B cell (primary cell): ENCODE measurements at regions of chr1 and their contacts with region 1.

Region 1: GRCh38 chr1:22025368-22026155 is 24.1 kb downstream of the CELA3A start:
- DNase-seq: peak; percentile 93
- ATAC-seq: peak; percentile 76
- H3K4me3 ChIP-seq: peak overlapping the region; percentile 85 to 99 (median 94)
- H3K4me3 Mint-ChIP-seq: peak overlapping the region; percentile 96
- H3K27ac ChIP-seq: peak overlapping the region; percentile 98
- H3K27ac Mint-ChIP-seq: peak overlapping the region; percentile 98
- H3K4me1 ChIP-seq: peaks cover 17 to 38% of the 10 kb centered on the region in 2 donors
- H3K4me1 Mint-ChIP-seq: peaks cover 43% of the 10 kb centered on the region
- H3K27me3 ChIP-seq: no peaks in the 10 kb centered on the region
- H3K27me3 Mint-ChIP-seq: no peaks in the 10 kb centered on the region
- CTCF ChIP-seq: no peak

Region 2: GRCh38 chr1:20786253-20787028 is 1239.1 kb before region 1 on chr1:
- CTCF ChIA-PET with region 1: no interaction called
- POLR2A ChIA-PET with region 1: interaction called, 5 read pairs
- intact Hi-C with region 1: loop called (anchors 5 kb)
- DNase-seq: peak; percentile 98
- ATAC-seq: peak; percentile 72
- H3K4me3 ChIP-seq: peak overlapping the region; percentile 78 to 92 (median 82)
- H3K4me3 Mint-ChIP-seq: peak overlapping the region; percentile 99
- H3K27ac ChIP-seq: peak overlapping the region; percentile 81 to 91
- H3K27ac Mint-ChIP-seq: peak overlapping the region; percentile 98
- H3K4me1 ChIP-seq: peaks cover 19 to 33% of the 10 kb centered on the region in 2 donors
- H3K4me1 Mint-ChIP-seq: peaks cover 39% of the 10 kb centered on the region
- H3K27me3 ChIP-seq: no peaks in the 10 kb centered on the region
- H3K27me3 Mint-ChIP-seq: no peaks in the 10 kb centered on the region
- CTCF ChIP-seq: no peak

Region 3: DNA sequence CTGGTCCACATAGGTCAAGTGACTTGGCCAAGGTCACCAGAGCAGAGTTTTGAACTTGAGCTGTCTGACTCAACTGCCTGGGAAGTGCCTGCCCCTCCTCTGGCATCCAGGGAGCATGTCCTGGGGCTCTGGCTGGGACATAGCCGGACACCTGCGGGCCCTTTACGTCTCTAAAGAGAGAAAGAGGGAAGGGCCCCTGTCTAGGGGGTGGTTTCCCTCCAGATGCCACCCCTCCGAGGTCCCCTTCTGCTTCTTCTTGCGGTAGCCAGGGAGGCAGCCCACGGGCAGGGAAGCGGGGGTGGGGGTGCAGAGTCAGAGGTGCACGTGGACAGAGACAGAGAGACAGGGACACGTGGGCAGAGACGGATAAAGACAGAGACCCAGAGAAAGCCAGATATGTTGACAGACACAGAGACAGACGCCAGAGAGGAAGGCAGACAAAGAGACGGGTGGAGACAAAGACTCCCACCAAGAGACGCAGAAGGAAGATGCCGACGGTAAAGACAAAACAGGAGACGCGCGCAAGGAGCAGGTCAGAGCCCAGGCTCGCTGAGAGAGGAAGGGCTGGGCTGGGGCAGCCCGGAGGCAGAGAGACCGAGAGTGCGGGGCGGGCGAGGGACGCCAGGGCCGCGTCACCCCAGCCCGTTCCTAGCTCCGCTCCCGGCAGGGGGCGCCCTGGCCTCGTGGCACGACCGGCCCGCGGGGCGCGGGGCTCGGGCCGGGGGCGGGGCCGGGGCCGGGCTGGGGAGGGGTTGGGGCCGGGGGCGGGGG is 516.8 kb before region 1 on chr1:
- CTCF ChIA-PET with region 1: no interaction called
- POLR2A ChIA-PET with region 1: no interaction called
- intact Hi-C with region 1: loop called (anchors 10 kb)
- DNase-seq: peak; percentile 82
- ATAC-seq: peak; percentile 96
- H3K4me3 ChIP-seq: peak overlapping the region in 4 of 5 experiments; percentile 11 to 41 (median 38)
- H3K4me3 Mint-ChIP-seq: peak overlapping the region; percentile 82
- H3K27ac ChIP-seq: no peak overlapping the region
- H3K27ac Mint-ChIP-seq: no peak overlapping the region
- H3K4me1 ChIP-seq: peaks cover 22 to 33% of the 10 kb centered on the region in 2 donors
- H3K4me1 Mint-ChIP-seq: peaks cover 19% of the 10 kb centered on the region
- H3K27me3 ChIP-seq: peaks cover 0 to 39% (median 9%) of the 10 kb centered on the region in 4 experiments
- H3K27me3 Mint-ChIP-seq: peaks cover 34% of the 10 kb centered on the region
- CTCF ChIP-seq: peak; percentile 39

Region 4: GRCh38 chr1:22052115-22053016 is 26.8 kb after region 1 on chr1 and contains the start of gene CDC42:
- CTCF ChIA-PET with region 1: interaction called, 89 read pairs
- POLR2A ChIA-PET with region 1: interaction called, 87 read pairs
- intact Hi-C with region 1: loop called (anchors 1 kb)
- DNase-seq: peak; percentile 97
- ATAC-seq: peak; percentile 90
- H3K4me3 ChIP-seq: peak within 1 kb of the TSS; percentile 66 to 89 (median 79)
- H3K4me3 Mint-ChIP-seq: peak within 1 kb of the TSS; percentile 98
- H3K27ac ChIP-seq: peak within 1 kb of the TSS; percentile 96 to 98
- H3K27ac Mint-ChIP-seq: peak within 1 kb of the TSS; percentile 98
- H3K4me1 ChIP-seq: peaks cover 37 to 47% of the 10 kb centered on the region in 2 donors
- H3K4me1 Mint-ChIP-seq: peaks cover 45% of the 10 kb centered on the region
- H3K27me3 ChIP-seq: no peaks in the 10 kb centered on the region
- H3K27me3 Mint-ChIP-seq: no peaks in the 10 kb centered on the region
- CTCF ChIP-seq: no peak
- total RNA-seq, gene CDC42: 202 and 209 TPM in 2 replicates

Region 5: DNA sequence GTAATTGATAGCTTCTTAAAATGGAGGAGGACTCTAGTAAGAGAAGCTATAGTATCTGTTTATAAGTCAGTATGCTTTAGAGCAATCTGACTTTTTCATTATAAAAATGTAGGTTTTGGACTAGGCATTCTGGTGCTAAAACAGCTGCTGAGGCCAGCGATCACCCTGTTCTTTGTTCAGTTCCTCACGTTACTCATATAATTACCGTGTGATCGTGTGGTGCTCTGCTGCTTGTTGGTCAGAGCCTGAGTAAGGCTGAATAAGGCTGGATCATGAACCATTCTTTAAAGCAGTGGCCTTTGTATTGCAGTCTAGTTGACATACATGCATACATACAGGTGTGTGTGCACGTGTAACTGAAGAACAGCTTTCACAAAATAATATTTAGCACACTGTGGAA is 52.2 kb after region 1 on chr1:
- CTCF ChIA-PET with region 1: interaction called, 24 read pairs
- POLR2A ChIA-PET with region 1: no interaction called
- intact Hi-C with region 1: no loop called
- DNase-seq: no peak
- ATAC-seq: no peak
- H3K4me3 ChIP-seq: no peak overlapping the region
- H3K4me3 Mint-ChIP-seq: peak overlapping the region; percentile 35
- H3K27ac ChIP-seq: peak overlapping the region in 1 of 2 donors; percentile 17
- H3K27ac Mint-ChIP-seq: no peak overlapping the region
- H3K4me1 ChIP-seq: peaks cover 55 to 63% of the 10 kb centered on the region in 2 donors
- H3K4me1 Mint-ChIP-seq: peaks cover 78% of the 10 kb centered on the region
- H3K27me3 ChIP-seq: no peaks in the 10 kb centered on the region
- H3K27me3 Mint-ChIP-seq: no peaks in the 10 kb centered on the region
- CTCF ChIP-seq: no peak